Activated CD4-positive, alpha-beta T cell treated with anti-CD3 and anti-CD28 coated beads for 36 hours (primary cell): ENCODE measurements at regions of chr3 and their contacts with region 1.

Region 1: GRCh38 chr3:123723522-123724168 is 138.8 kb upstream of the HACD2 start:
- DNase-seq: peak; percentile 65
- ATAC-seq: peak; percentile 82
- H3K4me3 Mint-ChIP-seq: no peak overlapping the region
- H3K27ac Mint-ChIP-seq: no peak overlapping the region
- H3K4me1 Mint-ChIP-seq: no peaks in the 10 kb centered on the region
- H3K27me3 Mint-ChIP-seq: peaks cover 6% of the 10 kb centered on the region

Region 2: GRCh38 chr3:123328851-123329635 is 394.6 kb before region 1 on chr3:
- CTCF ChIA-PET with region 1: no interaction called
- POLR2A ChIA-PET with region 1: no interaction called
- intact Hi-C with region 1: loop called in 1 of 2 experiments (anchors 10 kb)
- DNase-seq: peak; percentile 86
- ATAC-seq: peak; percentile 90
- H3K4me3 Mint-ChIP-seq: no peak overlapping the region
- H3K27ac Mint-ChIP-seq: no peak overlapping the region
- H3K4me1 Mint-ChIP-seq: no peaks in the 10 kb centered on the region
- H3K27me3 Mint-ChIP-seq: peaks cover 3% of the 10 kb centered on the region

Region 3: DNA sequence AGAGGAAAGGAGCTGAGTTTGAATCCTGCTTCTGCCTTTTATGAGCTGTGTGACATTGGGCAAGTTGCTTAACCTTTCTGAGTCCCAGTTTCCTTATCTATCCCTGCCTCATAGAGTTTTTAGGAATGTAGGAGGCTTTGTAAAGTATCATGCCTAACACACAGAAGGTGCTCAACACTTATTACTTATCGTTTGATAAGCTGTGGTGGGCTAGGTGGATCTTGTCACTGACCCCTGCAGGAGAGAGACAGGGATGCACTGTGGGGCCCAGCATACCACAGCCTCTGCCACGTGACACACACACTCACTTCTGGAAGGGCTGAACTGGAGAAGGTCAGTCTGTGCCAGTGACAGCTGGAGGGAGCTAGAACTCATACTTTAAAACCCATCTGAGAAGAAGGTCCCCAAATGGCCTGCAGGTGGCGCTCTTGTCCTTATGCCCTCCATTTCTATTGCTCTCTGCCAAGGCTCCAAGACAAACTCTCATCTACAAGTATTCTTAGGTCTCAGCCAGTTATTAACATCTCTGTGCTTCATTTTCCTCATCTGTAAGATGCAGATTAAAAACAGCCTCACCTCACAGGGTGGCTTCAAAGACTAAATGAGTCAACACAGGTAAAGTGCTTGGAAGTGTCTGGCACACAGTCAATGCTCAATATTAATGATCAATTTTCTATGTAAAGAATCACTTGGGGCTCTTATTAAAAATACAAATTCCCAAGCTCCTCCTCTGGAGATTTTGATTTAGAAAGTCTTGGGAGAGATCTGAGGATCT is 81.3 kb before region 1 on chr3:
- CTCF ChIA-PET with region 1: interaction called, 29 read pairs
- POLR2A ChIA-PET with region 1: no interaction called
- intact Hi-C with region 1: loop called in 1 of 2 experiments (anchors 1 kb)
- DNase-seq: peak; percentile 84
- ATAC-seq: peak; percentile 97
- H3K4me3 Mint-ChIP-seq: no peak overlapping the region
- H3K27ac Mint-ChIP-seq: no peak overlapping the region
- H3K4me1 Mint-ChIP-seq: no peaks in the 10 kb centered on the region
- H3K27me3 Mint-ChIP-seq: no peaks in the 10 kb centered on the region

Region 4: DNA sequence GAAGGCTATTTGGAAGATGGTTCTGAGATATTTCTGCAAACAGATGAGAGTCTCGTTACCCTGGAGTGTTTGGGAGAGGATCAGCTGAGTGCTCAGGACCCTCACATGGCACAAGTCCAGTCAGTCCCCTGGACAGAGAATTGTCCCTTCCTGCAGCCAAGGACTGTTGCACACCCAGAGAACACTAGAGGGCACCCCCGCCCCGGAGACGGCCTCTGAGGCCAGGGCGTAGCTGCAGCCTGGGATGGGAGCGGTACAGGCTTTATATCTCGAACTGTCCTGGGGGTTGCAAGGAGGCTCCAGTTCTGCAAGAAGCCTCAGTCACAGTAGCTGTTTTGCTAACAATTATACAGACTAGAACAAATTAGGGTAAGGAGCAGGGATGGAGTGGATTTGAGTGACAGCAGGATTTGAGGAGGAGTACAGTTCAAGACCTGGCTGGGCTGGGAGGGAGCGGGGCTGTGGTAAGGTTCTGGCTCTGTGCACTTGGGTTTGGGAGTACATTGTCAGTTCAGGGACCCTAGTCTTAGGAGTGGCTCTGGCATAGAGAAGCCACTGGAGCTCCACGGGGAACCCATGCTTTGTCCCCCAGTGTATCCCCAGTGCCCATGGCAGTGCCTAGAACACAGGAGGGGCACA is 71.2 kb before region 1 on chr3:
- CTCF ChIA-PET with region 1: interaction called, 30 read pairs
- POLR2A ChIA-PET with region 1: no interaction called
- intact Hi-C with region 1: loop called (anchors 1 to 2 kb)
- DNase-seq: peak; percentile 69
- ATAC-seq: peak; percentile 82
- H3K4me3 Mint-ChIP-seq: no peak overlapping the region
- H3K27ac Mint-ChIP-seq: no peak overlapping the region
- H3K4me1 Mint-ChIP-seq: no peaks in the 10 kb centered on the region
- H3K27me3 Mint-ChIP-seq: no peaks in the 10 kb centered on the region

Region 5: DNA sequence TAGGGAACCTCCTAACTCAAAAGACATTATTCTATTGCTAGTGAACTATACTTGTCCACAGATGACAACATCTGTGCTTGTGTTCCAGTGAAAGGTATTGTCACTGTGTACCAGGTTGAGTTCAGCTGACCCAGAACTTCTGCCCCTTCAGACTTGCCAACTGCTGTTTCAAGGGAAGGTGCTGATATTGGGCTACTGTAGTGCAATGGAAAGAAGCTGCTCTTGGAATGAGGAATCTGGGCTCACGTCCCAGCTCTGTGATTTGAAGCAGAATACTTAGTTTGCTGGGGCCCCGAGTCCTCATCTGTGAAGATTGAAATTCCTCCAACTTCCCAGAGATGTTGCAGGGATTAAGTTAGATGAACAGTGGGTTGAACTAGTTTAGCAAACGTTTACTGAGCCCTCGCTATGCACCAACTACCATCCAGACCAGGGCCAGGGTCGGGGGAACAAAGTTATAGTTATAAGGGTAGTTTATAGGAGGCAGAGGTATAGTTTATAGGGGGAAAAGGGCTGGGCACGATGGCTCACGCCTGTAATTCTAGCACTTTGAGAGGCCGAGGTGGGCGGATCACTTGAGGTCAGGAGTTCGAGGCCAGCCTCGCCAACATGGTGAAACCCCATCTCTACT is 990.7 kb after region 1 on chr3:
- CTCF ChIA-PET with region 1: no interaction called
- POLR2A ChIA-PET with region 1: no interaction called
- intact Hi-C with region 1: no loop called
- DNase-seq: no peak
- ATAC-seq: no peak
- H3K4me3 Mint-ChIP-seq: no peak overlapping the region
- H3K27ac Mint-ChIP-seq: no peak overlapping the region
- H3K4me1 Mint-ChIP-seq: no peaks in the 10 kb centered on the region
- H3K27me3 Mint-ChIP-seq: peaks cover 12% of the 10 kb centered on the region